RWPE1 (cell line): ENCODE measurements at regions of chr17 and their contacts with region 1.

Region 1: DNA sequence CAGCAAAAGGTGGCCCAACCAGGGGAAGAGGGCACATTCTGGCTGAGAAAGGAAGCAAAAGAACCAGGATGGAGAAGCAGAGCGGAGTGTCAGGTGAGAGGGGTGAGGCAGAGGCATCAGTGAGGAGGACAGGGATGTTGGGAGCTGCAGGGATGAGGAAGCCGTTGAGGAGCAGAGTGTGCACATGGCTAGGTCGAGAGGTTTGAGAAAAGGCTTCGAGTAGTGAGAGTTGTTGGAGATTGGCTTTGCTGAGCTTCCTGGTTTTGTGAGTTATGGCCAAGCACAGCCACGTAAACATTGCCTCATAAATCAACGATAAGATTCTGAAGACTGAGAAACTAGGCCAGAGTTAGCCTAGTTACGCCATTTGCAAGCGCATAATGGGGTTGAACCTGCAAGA is 26.9 kb downstream of the DNAH2 start:
- DNase-seq: no peak
- H3K27ac ChIP-seq: no peak overlapping the region; the same call in 1 of the 2 replicates
- CTCF ChIP-seq: no peak

Region 2: DNA sequence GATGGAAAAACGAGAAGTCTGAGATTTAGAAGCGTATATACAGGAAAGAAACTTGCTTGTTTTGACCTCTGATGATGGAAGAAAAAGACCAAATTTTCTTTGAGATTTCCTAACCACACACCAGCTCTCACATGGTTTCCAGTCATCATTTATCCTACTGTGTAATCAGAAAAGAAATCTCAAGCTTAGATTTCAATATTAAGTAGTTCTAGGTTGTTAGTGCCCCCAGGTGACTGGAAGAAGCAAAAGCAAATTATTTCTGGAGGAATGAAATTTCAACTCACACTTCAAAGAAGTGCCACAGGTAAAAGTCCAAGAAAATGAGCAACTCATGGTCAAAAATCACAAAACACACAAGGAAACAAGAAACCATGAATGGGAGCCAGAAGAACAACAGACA is 37.8 kb after region 1 on chr17:
- CTCF ChIA-PET with region 1: interaction called, 20 read pairs
- POLR2A ChIA-PET with region 1: no interaction called
- DNase-seq: no peak
- H3K27ac ChIP-seq: no peak overlapping the region
- CTCF ChIP-seq: no peak

Region 3: DNA sequence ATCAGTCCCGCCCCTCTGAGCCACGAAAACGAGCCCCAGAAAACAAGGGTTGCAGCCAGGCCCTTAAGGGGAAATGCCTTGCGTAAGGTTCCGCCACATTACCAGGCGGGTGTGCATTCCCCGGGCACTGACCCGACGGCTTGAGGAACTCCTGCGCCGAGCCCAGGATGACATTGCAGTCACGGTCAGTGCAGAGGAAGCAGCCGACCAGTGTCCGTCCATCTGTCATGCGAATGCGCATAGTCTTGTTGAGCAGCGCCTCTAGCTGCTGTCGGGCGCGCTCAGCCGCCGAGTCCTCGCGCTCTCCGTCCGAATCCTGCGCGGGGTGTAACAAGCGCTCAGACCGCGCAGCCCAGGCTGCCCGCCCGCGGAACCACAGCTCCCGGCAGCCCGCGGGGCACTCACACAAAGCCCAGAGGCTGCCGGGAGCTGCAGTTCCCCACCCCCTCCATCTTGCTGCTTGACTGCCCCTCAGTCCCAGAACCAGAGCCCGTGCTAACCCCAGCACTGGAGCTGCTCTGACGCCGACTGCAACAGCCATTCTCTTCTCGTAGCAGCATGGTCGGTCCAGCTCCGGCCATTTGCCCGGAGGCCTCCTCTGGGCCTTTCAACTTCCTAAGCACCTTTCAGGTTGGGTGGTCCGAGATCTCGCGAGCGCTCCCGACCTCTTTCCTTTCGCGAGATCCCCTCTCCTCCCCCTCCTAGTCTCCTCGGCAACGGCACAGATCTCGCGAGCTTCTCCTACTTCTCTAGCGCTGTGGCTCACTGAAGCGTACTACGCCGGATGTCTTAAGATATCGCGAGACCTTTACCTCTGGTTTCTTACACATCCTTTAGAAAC is 112.7 kb after region 1 on chr17 and contains the start of gene NAA38:
- CTCF ChIA-PET with region 1: interaction called, 13 read pairs
- POLR2A ChIA-PET with region 1: no interaction called
- DNase-seq: peak; percentile 94
- H3K27ac ChIP-seq: peak within 1 kb of the TSS; percentile 94
- CTCF ChIP-seq: peak; percentile 48; the same call in 1 of the 2 replicates